ENCODE measurements at regions of chr18 and their contacts with region 1.

Region 1: GRCh38 chr18:56575819-56576663 is 62.4 kb downstream of the TXNL1 start:
- DNase-seq: peak; percentile 68
- H3K4me3 Mint-ChIP-seq: no peak overlapping the region
- H3K27ac Mint-ChIP-seq: no peak overlapping the region
- H3K4me1 Mint-ChIP-seq: no peaks in the 10 kb centered on the region
- H3K27me3 Mint-ChIP-seq: no peaks in the 10 kb centered on the region
- CTCF ChIP-seq: peak; percentile 60

Region 2: GRCh38 chr18:55589625-55590291 is 986.3 kb before region 1 on chr18:
- CTCF ChIA-PET with region 1: no interaction called
- POLR2A ChIA-PET with region 1: no interaction called
- intact Hi-C with region 1: loop called (anchors 10 kb)
- DNase-seq: peak; percentile 94
- H3K4me3 Mint-ChIP-seq: peak overlapping the region; percentile 88
- H3K27ac Mint-ChIP-seq: peak overlapping the region; percentile 96
- H3K4me1 Mint-ChIP-seq: peaks cover 17% of the 10 kb centered on the region
- H3K27me3 Mint-ChIP-seq: no peaks in the 10 kb centered on the region
- CTCF ChIP-seq: no peak

Region 3: GRCh38 chr18:55753643-55754263 is 822.3 kb before region 1 on chr18:
- CTCF ChIA-PET with region 1: no interaction called
- POLR2A ChIA-PET with region 1: no interaction called
- intact Hi-C with region 1: loop called (anchors 10 kb)
- DNase-seq: peak; percentile 86
- H3K4me3 Mint-ChIP-seq: no peak overlapping the region
- H3K27ac Mint-ChIP-seq: peak overlapping the region; percentile 8
- H3K4me1 Mint-ChIP-seq: peaks cover 7% of the 10 kb centered on the region
- H3K27me3 Mint-ChIP-seq: no peaks in the 10 kb centered on the region
- CTCF ChIP-seq: no peak

Region 4: DNA sequence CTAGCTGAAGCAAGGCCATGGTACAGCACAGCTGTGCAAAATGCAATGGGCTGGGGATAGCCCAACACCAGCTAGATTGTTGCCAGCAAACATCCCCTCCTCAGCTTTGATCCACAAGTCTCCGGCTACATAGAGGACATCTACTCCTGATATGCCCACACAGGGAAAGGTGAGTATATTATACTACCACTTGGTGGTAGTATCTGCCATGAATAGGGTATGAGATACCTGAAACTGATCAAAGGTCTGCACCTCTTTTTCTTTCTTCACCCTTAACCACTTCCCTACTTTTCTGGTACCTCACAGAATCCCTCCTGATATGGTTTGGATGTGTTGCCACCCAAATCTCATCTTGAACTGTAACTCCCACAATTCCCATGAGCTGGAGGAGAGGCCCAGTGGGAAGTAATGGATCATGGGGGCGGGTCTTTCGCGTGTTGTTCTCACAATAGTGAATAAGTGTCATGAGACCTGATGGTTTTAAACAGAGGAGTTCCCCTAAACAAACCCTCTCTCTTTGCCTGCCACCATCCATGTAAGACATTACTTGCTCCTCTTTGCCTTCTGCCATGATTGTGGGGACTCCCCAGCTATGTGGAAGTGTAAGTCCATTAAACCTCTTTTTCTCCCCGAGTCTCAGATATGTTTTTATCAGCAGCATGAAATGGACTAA is 217.3 kb before region 1 on chr18:
- CTCF ChIA-PET with region 1: interaction called, 59 read pairs
- POLR2A ChIA-PET with region 1: no interaction called
- intact Hi-C with region 1: loop called (anchors 1 kb)
- DNase-seq: peak; percentile 17
- H3K4me3 Mint-ChIP-seq: no peak overlapping the region
- H3K27ac Mint-ChIP-seq: no peak overlapping the region
- H3K4me1 Mint-ChIP-seq: no peaks in the 10 kb centered on the region
- H3K27me3 Mint-ChIP-seq: no peaks in the 10 kb centered on the region
- CTCF ChIP-seq: peak; percentile 17

Region 5: DNA sequence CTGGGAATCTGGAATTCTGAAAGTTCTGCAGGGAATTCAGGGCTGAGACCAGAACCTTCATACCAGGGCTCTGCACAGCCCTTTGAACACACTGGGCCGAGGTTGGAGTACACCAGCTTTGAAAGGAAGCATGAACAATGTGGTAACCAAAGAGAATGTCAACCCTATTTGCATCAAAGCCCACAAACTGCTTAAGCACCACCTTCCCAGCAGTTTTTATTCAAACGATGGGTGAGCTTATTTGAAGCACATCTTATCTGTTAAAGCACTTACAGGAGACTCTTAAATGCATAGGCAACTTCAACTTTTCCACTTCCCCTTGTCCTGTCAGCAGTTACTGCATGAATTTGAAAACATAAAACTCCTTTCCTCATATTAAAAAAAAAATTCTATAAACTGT is 34.2 kb before region 1 on chr18:
- CTCF ChIA-PET with region 1: no interaction called
- POLR2A ChIA-PET with region 1: no interaction called
- intact Hi-C with region 1: no loop called
- DNase-seq: no peak
- H3K4me3 Mint-ChIP-seq: no peak overlapping the region
- H3K27ac Mint-ChIP-seq: no peak overlapping the region
- H3K4me1 Mint-ChIP-seq: no peaks in the 10 kb centered on the region
- H3K27me3 Mint-ChIP-seq: no peaks in the 10 kb centered on the region
- CTCF ChIP-seq: no peak

Region 6: GRCh38 chr18:56563568-56563967 is 12.5 kb before region 1 on chr18:
- CTCF ChIA-PET with region 1: interaction called, 15 read pairs
- POLR2A ChIA-PET with region 1: no interaction called
- intact Hi-C with region 1: no loop called
- DNase-seq: peak; percentile 1
- H3K4me3 Mint-ChIP-seq: no peak overlapping the region
- H3K27ac Mint-ChIP-seq: no peak overlapping the region
- H3K4me1 Mint-ChIP-seq: no peaks in the 10 kb centered on the region
- H3K27me3 Mint-ChIP-seq: no peaks in the 10 kb centered on the region
- CTCF ChIP-seq: no peak

Region 7: GRCh38 chr18:56756966-56757365 is 180.9 kb after region 1 on chr18:
- CTCF ChIA-PET with region 1: no interaction called
- POLR2A ChIA-PET with region 1: no interaction called
- intact Hi-C with region 1: no loop called
- DNase-seq: no peak
- H3K4me3 Mint-ChIP-seq: no peak overlapping the region
- H3K27ac Mint-ChIP-seq: no peak overlapping the region
- H3K4me1 Mint-ChIP-seq: no peaks in the 10 kb centered on the region
- H3K27me3 Mint-ChIP-seq: no peaks in the 10 kb centered on the region
- CTCF ChIP-seq: no peak